Naive thymus-derived CD4-positive, alpha-beta T cell (primary cell): ENCODE measurements at regions of chr6 and their contacts with region 1.

Region 1: DNA sequence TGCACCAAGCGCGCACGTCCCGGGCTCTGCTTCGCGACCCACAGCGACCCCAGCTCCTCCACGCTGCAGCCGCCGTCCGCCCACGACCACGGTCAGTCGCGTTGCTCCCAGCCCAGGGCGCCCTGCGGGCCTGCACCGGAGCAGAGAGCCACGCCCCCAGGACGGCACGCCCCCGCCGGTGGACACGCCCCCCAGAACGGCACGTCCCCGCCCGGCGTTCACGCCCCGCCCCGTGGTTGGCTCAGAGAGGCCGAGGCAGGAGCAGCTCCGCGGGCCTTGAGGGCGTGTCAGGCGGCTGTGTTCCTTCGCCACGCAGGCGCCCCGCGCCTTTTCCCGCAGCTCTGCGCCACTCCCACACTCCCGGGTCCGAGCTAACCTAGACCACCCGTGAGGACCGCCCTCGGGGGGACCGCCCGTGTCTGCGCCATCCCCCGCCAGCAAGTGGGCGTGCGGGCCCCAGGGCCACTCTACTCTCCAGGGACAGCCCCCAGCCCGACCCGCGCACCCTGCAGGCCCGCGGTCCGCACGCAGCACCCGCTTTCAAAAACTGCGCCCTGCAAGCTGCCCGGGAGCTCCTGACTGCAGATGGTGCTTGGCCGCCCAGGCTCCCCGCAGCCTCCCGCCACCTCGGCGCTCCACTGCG is at the start of gene RNASET2:
- DNase-seq: peak; percentile 95 to 100 (median 99)
- ATAC-seq: peak; percentile 93
- H3K4me3 ChIP-seq: peak within 1 kb of the TSS; percentile 86
- H3K4me3 Mint-ChIP-seq: peak within 1 kb of the TSS; percentile 87 to 99 (median 96)
- H3K27ac ChIP-seq: peak within 1 kb of the TSS; percentile 92
- H3K27ac Mint-ChIP-seq: peak within 1 kb of the TSS; percentile 95 to 99 (median 99)
- H3K4me1 ChIP-seq: peaks cover 41 to 66% of the 10 kb centered on the region in 2 donors
- H3K4me1 Mint-ChIP-seq: peaks cover 56 to 79% (median 73%) of the 10 kb centered on the region in 7 donors
- H3K27me3 ChIP-seq: no peaks in the 10 kb centered on the region
- H3K27me3 Mint-ChIP-seq: no peaks in the 10 kb centered on the region
- total RNA-seq, gene RNASET2: 147 to 332 (median 264) TPM

Region 2: GRCh38 chr6:165515963-165516624 is 1440.5 kb before region 1 on chr6:
- CTCF ChIA-PET with region 1: no interaction called
- POLR2A ChIA-PET with region 1: no interaction called
- intact Hi-C with region 1: no loop called
- DNase-seq: no peak
- ATAC-seq: no peak
- H3K4me3 ChIP-seq: no peak overlapping the region
- H3K4me3 Mint-ChIP-seq: no peak overlapping the region
- H3K27ac ChIP-seq: no peak overlapping the region
- H3K27ac Mint-ChIP-seq: no peak overlapping the region
- H3K4me1 ChIP-seq: no peaks in the 10 kb centered on the region
- H3K4me1 Mint-ChIP-seq: peaks cover 0 to 8% (median 0%) of the 10 kb centered on the region in 7 donors
- H3K27me3 ChIP-seq: no peaks in the 10 kb centered on the region
- H3K27me3 Mint-ChIP-seq: no peaks in the 10 kb centered on the region

Region 3: DNA sequence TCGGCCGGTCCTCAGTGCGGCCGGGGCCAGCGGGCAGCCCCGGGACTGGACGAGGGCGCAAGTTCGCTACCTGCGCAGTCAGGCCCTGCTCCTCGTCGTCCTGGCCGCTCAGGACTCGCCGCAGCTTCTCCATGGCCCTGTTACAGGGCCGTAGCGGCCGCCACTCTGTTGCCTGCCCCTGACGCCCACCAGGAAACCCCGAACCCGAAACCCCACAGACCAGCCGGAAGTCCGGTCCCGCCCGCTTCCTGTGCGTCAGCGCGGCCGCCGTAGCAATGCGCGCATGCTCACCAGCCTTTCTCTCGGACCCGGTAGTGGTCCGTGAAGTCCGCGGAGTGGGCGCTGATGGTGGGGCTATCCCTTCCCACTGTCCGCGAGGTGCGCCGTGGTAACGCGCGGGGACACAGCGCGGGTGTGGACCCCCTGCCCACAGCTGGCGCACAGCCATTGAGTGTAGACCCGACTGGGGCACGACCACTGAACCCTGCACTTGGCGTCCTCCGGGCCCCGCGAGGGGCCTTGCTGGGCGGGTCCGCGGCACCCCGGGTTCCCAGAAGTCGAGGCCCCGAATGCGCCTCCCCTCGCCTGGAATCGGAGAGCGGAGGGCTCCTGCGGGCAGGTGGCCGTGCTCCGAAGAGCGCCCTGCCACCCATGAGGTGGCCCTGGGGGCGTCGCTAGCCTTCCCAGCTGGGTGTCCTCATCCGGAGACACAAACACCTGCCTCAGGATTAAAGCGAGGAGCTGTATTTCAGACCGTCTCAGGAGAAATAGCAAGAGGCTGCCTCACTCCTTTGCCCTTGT is 614.0 kb before region 1 on chr6 and contains the start of gene SFT2D1:
- CTCF ChIA-PET with region 1: no interaction called
- POLR2A ChIA-PET with region 1: no interaction called
- intact Hi-C with region 1: loop called in 1 of 2 experiments (anchors 2 kb)
- DNase-seq: peak; percentile 33 to 87 (median 47)
- ATAC-seq: peak; percentile 88
- H3K4me3 ChIP-seq: peak within 1 kb of the TSS; percentile 94
- H3K4me3 Mint-ChIP-seq: peak within 1 kb of the TSS in 8 of 10 donors; percentile 83 to 94 (median 90)
- H3K27ac ChIP-seq: peak within 1 kb of the TSS; percentile 79
- H3K27ac Mint-ChIP-seq: peak within 1 kb of the TSS; percentile 72 to 95 (median 84)
- H3K4me1 ChIP-seq: peaks cover 32 to 37% of the 10 kb centered on the region in 2 donors
- H3K4me1 Mint-ChIP-seq: peaks cover 4 to 18% (median 8%) of the 10 kb centered on the region in 7 donors
- H3K27me3 ChIP-seq: no peaks in the 10 kb centered on the region
- H3K27me3 Mint-ChIP-seq: peaks cover 0 to 10% (median 0%) of the 10 kb centered on the region in 5 donors
- total RNA-seq, gene SFT2D1: 18.3 to 50.1 (median 33.7) TPM

Region 4: DNA sequence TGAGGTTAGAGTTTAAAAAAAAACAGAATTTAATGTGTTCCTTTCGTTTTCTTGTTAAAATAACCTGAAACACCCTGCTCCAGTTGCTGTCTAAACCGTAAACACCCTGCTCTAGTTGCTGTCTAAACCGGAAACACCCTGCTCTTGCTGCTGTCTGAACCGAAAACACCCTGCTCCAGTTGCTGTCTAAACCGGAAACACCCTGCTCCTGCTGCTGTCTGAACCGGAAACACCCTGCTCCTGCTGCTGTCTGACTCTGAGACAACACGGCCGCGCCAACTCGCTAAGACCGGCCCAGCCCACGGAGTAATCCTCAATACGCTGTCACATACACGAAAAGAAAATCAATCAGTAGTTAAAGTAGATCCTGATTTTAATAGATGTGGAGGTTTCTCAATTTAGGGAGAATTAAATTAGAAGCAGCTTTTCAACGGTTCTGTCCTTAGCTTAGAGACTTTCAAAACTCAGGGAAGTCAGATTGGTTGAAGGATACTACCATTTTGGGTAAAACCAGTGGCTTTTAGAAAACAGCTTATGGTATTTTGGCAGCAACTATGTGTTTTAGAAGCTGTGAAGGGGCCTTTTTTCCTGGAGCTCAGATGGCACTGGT is 468.4 kb before region 1 on chr6:
- CTCF ChIA-PET with region 1: interaction called, 3 read pairs
- POLR2A ChIA-PET with region 1: no interaction called
- intact Hi-C with region 1: loop called (anchors 2 to 5 kb)
- DNase-seq: peak; percentile 37 to 90 (median 86)
- ATAC-seq: peak; percentile 94
- H3K4me3 ChIP-seq: peak overlapping the region; percentile 20
- H3K4me3 Mint-ChIP-seq: peak overlapping the region; percentile 43 to 84 (median 78)
- H3K27ac ChIP-seq: peak overlapping the region; percentile 79
- H3K27ac Mint-ChIP-seq: peak overlapping the region; percentile 93 to 98 (median 96)
- H3K4me1 ChIP-seq: peaks cover 17 to 18% of the 10 kb centered on the region in 2 donors
- H3K4me1 Mint-ChIP-seq: peaks cover 9 to 35% (median 27%) of the 10 kb centered on the region in 7 donors
- H3K27me3 ChIP-seq: no peaks in the 10 kb centered on the region
- H3K27me3 Mint-ChIP-seq: no peaks in the 10 kb centered on the region

Region 5: DNA sequence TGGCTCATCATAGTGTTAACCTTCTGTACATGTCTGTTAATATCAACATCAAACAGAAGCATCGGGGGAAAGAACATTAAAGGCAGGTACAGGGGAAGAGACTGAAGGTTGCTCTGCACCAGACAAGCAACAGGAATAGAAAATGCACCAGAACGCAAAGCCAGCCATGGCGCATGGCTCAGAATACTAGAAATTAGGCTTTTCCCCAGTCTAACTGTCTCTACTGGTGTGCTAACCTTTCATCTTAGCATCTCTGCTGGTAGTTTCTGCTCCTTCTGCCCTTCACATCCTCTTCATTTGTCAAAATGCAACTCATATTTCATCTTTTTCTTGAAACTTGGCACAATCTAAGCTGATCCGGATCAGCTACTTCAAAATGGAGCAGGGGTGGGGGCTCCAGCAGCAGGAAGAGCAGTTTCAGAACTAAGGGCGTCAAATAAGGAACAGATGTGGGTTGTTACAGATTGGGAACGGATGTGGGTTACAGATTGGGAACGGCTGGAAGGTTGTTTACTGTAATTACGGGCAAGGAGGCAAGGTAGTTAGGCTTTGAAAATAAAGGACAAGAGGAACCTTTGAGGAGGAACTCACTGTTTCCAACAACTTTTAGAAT is 12.9 kb after region 1 on chr6:
- CTCF ChIA-PET with region 1: interaction called, 7 read pairs
- POLR2A ChIA-PET with region 1: interaction called, 245 read pairs
- intact Hi-C with region 1: loop called (anchors 1 kb)
- DNase-seq: peak in 4 of 9 donors; percentile 31 to 70 (median 54)
- ATAC-seq: peak; percentile 68
- H3K4me3 ChIP-seq: no peak overlapping the region
- H3K4me3 Mint-ChIP-seq: peak overlapping the region; percentile 55 to 87 (median 74)
- H3K27ac ChIP-seq: peak overlapping the region; percentile 62
- H3K27ac Mint-ChIP-seq: peak overlapping the region; percentile 71 to 94 (median 87)
- H3K4me1 ChIP-seq: peaks cover 6 to 27% of the 10 kb centered on the region in 2 donors
- H3K4me1 Mint-ChIP-seq: peaks cover 16 to 74% (median 20%) of the 10 kb centered on the region in 7 donors
- H3K27me3 ChIP-seq: no peaks in the 10 kb centered on the region
- H3K27me3 Mint-ChIP-seq: no peaks in the 10 kb centered on the region

Region 6: GRCh38 chr6:167350731-167351655 is 394.4 kb after region 1 on chr6:
- CTCF ChIA-PET with region 1: no interaction called
- POLR2A ChIA-PET with region 1: no interaction called
- intact Hi-C with region 1: loop called in 1 of 2 experiments (anchors 10 kb)
- DNase-seq: peak; percentile 24 to 85 (median 66)
- ATAC-seq: peak; percentile 89
- H3K4me3 ChIP-seq: peak overlapping the region; percentile 65
- H3K4me3 Mint-ChIP-seq: peak overlapping the region; percentile 83 to 94 (median 91)
- H3K27ac ChIP-seq: no peak overlapping the region
- H3K27ac Mint-ChIP-seq: peak overlapping the region in 6 of 9 donors; percentile 11 to 70 (median 34)
- H3K4me1 ChIP-seq: peaks cover 0 to 4% of the 10 kb centered on the region in 2 donors
- H3K4me1 Mint-ChIP-seq: peaks cover 8 to 24% (median 16%) of the 10 kb centered on the region in 7 donors
- H3K27me3 ChIP-seq: no peaks in the 10 kb centered on the region
- H3K27me3 Mint-ChIP-seq: peaks cover 6 to 44% (median 20%) of the 10 kb centered on the region in 5 donors